ENCODE measurements at regions of chr5 and their contacts with region 1.

Region 1: DNA sequence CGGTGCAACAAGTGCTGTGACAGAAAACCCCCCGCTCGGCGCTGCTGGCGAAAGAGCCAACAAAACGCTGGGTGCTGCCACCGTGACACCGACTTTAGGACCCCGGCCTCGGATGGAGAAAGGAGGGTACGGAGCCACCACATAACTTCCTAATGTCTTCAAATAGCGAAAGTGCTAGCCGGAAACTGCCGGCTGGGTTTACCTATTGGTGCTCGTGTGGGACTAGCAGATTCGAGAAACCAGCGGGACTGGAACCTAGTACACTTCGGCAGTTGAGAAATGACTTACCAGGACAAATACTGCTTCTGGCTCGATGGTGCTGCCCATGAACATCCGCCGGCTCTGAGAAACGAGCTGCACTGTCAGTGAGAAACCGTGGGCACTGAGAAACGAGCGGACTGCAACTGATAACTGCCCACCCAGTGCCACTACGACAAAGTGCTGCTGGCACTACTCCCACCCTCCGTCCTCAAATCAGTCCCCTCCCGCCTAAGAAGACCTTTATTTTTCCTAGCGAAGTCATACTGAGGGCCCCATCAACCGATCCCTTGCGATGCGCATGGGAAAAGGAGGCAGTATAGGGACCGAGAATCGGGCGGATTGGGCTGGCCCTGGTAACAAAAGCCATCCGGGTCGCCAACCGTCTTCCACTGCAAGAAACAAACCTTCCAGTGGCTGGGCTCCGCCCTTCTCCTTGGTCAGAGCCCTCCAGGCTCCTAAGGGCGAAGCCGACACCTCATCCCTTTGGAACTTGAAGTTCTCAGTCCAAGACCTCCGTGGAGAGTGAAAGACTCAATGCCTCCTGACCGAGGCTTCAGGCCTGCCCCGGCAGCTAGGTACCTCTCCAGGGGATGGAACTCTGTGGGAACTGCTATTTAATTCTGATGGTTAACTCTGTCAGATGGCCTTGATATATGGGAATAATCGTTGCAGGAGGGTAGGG is 27.0 kb upstream of the ANXA2R start:
- H3K4me3 Mint-ChIP-seq: peak overlapping the region; percentile 100
- H3K27ac Mint-ChIP-seq: peak overlapping the region; percentile 99
- H3K4me1 Mint-ChIP-seq: peaks cover 49% of the 10 kb centered on the region
- H3K27me3 Mint-ChIP-seq: no peaks in the 10 kb centered on the region

Region 2: DNA sequence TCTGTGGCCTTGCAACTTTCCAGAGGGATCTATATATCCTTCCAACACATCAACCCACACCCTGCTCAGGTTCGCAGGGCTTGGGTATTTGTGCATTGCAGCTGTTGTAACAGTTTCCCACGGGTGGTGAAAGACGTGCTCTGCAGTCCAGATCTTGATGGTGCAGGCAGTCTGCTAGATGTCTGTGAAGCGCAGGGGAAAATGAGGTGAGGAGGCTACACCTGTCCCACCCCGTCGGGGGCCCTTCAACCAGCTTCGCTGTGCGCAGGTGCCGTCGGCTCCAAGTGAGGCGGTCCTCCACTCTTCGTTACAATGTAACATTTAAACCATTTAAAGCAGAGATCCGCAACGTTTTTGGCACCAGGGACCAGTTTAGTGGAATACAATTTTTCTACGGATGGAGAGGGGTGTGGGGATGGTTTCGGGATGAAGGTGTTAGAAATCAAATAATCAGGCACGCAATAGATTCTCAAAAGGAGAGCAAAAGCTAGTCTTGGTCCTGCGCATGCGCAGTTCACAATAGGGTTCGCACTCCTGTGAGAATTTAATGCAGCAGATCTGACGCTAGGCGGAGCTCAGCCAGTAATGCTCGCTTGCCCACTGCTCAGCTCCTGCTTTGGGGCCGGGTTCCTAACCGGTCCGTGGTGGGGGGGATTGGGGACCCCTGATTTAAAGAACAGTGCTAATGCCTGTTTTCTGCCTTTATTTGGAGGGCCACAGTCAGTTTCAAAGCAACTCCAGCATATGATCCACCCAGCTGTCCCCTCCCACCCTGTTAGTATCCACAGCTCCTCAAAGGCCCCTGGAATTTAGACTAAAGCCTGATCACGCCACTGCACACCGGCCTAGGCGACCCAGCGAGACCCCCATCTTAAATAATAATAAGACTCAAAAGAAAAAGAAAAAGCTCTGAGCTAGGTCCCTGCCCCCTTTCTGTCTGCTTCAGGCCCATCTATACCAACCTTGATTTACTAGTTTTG is 158.3 kb before region 1 on chr5:
- intact Hi-C with region 1: loop called (anchors 10 kb)
- H3K4me3 Mint-ChIP-seq: peak overlapping the region; percentile 77
- H3K27ac Mint-ChIP-seq: peak overlapping the region; percentile 62
- H3K4me1 Mint-ChIP-seq: peaks cover 9% of the 10 kb centered on the region
- H3K27me3 Mint-ChIP-seq: peaks cover 3% of the 10 kb centered on the region

Region 3: DNA sequence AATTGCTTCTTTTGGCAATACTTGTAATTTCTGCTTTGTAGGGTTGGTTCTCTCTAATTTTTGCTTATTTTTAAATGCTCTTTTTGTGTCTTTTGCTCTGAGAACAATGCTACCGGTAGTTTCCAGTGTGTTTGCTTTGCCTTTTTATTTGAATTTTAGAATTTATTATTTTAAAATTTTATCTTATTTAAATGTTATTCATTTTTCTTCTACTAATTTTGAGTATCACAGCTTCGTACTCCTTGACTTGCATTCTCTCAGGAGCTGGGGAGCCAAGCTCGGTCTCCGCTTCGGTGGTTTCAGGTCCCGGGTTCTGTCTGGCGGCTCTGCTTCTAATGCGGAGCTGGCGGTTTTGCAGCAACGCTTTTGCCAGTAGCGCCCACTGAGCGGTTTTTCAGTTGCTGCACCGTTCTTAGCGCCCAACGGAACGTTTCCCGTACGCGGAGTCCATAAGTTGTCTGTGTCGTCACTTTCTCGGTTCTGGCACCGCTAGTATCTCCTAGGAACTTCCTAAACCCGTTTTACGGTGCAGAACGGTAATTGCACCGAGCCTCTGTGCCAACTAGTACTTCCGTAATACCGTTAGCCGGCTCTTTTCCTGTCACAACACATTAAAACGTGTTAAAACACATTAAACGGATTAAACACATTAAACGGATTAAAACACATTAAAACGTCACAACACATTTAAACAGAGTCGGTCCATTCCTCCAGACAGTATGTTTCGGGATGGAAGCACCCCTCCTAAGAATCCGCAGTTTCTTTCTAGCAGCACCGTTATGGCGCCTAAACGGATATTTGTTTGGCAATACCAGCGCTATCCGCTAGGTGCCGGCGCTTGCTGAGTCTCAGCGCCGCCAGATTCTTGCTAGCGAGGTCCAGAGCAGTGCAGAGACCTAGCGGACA is 72.6 kb before region 1 on chr5:
- intact Hi-C with region 1: loop called (anchors 1 kb)
- H3K4me3 Mint-ChIP-seq: peak overlapping the region; percentile 100
- H3K27ac Mint-ChIP-seq: peak overlapping the region; percentile 100
- H3K4me1 Mint-ChIP-seq: peaks cover 34% of the 10 kb centered on the region
- H3K27me3 Mint-ChIP-seq: peaks cover 10% of the 10 kb centered on the region

Region 4: DNA sequence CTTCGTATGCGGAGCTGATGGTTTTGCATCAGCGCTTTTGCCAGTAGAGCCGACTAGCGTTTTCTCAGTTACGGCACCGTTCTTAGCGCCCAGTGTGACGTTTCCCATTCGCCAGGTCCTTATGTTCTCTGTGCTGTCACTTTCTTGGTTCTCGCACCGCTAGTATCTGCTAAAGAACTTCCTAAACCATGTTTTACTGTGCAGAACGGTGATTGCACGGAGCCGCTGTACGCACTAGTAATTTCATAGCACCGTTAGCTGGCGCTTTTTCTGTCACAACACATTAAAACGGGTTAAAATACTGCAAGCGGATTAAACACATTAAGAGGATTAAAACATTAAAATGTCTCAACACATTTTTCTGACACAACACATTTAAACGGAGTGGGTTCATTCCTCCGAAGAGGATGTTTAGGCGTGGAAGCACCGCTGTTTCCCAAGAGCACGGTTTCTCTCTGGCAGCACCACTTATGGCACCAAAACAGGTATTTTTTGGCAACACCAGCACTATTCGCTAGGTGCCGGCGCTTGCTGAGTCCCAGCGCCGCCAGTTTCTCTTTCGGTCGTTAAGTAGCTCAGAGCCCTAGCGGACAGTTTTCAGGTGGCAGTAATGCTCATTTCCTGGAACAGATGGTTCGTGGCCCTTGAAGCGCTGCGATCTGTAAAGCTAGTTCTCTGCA is 47.3 kb before region 1 on chr5:
- intact Hi-C with region 1: loop called (anchors 2 kb)
- H3K4me3 Mint-ChIP-seq: peak overlapping the region; percentile 89
- H3K27ac Mint-ChIP-seq: peak overlapping the region; percentile 99
- H3K4me1 Mint-ChIP-seq: peaks cover 37% of the 10 kb centered on the region
- H3K27me3 Mint-ChIP-seq: no peaks in the 10 kb centered on the region

Region 5: DNA sequence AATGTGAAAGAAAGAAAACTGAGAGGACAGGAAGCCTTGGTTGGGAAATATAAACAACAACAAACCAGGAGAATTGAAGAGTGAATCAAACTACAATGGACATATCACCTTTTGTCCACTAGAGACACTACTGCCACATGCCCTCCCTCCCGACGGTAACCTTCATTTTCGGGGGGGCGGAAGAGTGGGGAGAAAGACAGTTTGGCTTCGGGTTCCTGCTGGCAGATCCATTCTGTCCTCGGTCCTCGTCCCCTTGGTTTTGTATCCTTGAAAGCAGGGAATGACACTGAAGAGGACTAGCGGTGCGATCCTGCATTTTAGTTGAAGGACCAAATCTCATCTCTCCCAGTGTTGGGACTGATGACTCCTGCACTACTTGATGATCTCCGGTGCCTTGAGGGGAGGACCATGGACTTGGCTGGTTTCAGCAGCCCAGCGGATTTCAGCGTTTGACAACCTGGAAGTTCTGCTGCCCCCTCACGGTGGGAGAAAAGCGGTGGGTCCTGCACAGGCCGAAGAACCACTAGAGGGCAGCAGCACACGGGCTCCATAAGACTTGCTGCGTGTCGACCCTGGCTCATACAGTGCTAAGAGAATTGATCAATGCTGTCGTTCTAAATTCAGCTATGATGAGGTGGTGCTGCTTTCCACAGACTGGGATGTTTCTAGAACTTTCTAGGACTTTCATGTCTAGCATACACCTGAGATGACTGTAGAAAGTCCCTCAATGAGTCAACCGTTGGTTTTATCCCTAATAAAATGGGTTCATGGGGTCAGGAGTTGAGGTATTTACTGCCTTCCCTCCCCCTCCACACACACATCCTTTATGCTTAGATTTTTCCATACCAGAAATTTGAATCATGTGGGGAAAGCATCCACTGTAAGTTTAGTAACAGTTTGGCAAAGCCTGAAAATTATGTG is 38.6 kb after region 1 on chr5:
- intact Hi-C with region 1: loop called (anchors 5 kb)
- H3K4me3 Mint-ChIP-seq: peak overlapping the region; percentile 72
- H3K27ac Mint-ChIP-seq: peak overlapping the region; percentile 73
- H3K4me1 Mint-ChIP-seq: peaks cover 20% of the 10 kb centered on the region
- H3K27me3 Mint-ChIP-seq: no peaks in the 10 kb centered on the region

Region 6: GRCh38 chr5:43313035-43313853 is 246.2 kb after region 1 on chr5 and contains the start of gene HMGCS1:
- intact Hi-C with region 1: loop called (anchors 5 kb)
- H3K4me3 Mint-ChIP-seq: peak within 1 kb of the TSS; percentile 98
- H3K27ac Mint-ChIP-seq: peak within 1 kb of the TSS; percentile 98
- H3K4me1 Mint-ChIP-seq: peaks cover 40% of the 10 kb centered on the region
- H3K27me3 Mint-ChIP-seq: peaks cover 5% of the 10 kb centered on the region

Measured in dendritic cell treated with granulocyte-macrophage colony-stimulating factor and Interleukin-4, amounts not matched to agents 40 ng/mL and 50 ng/mL, for 4 days (primary cell).